ENCODE measurements at regions of chr4 and their contacts with region 1.

Region 1: GRCh38 chr4:163554870-163555465 is 60.5 kb downstream of the TMA16 start:
- DNase-seq: peak; percentile 23
- H3K4me3 ChIP-seq: peak overlapping the region in 1 of 2 experiments; percentile 33; a peak in 1 of 4 replicates
- H3K27ac ChIP-seq: no peak overlapping the region
- H3K4me1 ChIP-seq: peaks cover 0 to 2% of the 10 kb centered on the region in 2 experiments; a peak in 2 of 4 replicates
- H3K27me3 ChIP-seq: peaks cover 33% of the 10 kb centered on the region; the same call in 1 of the 2 replicates
- CTCF ChIP-seq: peak; percentile 88
- EP300 ChIP-seq: no peak
- RAD21 ChIP-seq: peak; percentile 60

Region 2: GRCh38 chr4:163415668-163416067 is 139.3 kb before region 1 on chr4:
- CTCF ChIA-PET with region 1: no interaction called
- POLR2A ChIA-PET with region 1: no interaction called
- DNase-seq: no peak
- H3K4me3 ChIP-seq: no peak overlapping the region
- H3K27ac ChIP-seq: no peak overlapping the region
- H3K4me1 ChIP-seq: no peaks in the 10 kb centered on the region
- H3K27me3 ChIP-seq: no peaks in the 10 kb centered on the region
- CTCF ChIP-seq: no peak
- EP300 ChIP-seq: no peak
- RAD21 ChIP-seq: no peak

Region 3: DNA sequence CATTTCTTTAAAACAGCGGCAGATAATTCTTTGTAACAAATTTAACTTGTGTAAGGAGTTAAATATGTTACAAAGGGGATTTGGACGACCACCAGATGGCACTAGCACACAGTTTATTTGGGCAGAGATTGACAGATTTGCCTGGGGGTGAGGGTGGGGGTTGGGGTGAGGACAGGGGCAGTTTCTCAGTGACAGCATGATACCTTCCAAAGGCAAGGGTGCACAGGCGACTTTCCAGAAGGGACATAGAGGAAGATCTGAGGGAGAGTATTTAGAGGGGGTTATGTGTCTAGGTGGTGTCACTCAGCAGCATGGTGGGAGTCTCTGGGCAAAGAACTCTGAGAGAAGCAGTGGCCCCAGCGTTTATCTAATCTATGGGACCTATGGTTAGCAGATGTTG is 70.1 kb before region 1 on chr4:
- CTCF ChIA-PET with region 1: interaction called, 94 read pairs
- POLR2A ChIA-PET with region 1: no interaction called
- DNase-seq: peak; percentile 63
- H3K4me3 ChIP-seq: peak overlapping the region in 1 of 2 experiments; percentile 50; a peak in 1 of 4 replicates
- H3K27ac ChIP-seq: no peak overlapping the region
- H3K4me1 ChIP-seq: no peaks in the 10 kb centered on the region
- H3K27me3 ChIP-seq: peaks cover 18% of the 10 kb centered on the region; the same call in 1 of the 2 replicates
- CTCF ChIP-seq: peak; percentile 76
- EP300 ChIP-seq: no peak
- RAD21 ChIP-seq: peak; percentile 81

Region 4: GRCh38 chr4:163681208-163681821 is 126.3 kb after region 1 on chr4:
- CTCF ChIA-PET with region 1: interaction called, 42 read pairs
- POLR2A ChIA-PET with region 1: no interaction called
- DNase-seq: peak; percentile 48
- H3K4me3 ChIP-seq: no peak overlapping the region; a peak in 1 of 4 replicates
- H3K27ac ChIP-seq: no peak overlapping the region
- H3K4me1 ChIP-seq: no peaks in the 10 kb centered on the region
- H3K27me3 ChIP-seq: no peaks in the 10 kb centered on the region; the same call in 1 of the 2 replicates
- CTCF ChIP-seq: peak; percentile 69
- EP300 ChIP-seq: no peak
- RAD21 ChIP-seq: peak; percentile 64

Region 5: GRCh38 chr4:164012396-164013027 is 457.5 kb after region 1 on chr4:
- CTCF ChIA-PET with region 1: interaction called, 38 read pairs
- POLR2A ChIA-PET with region 1: no interaction called
- DNase-seq: peak; percentile 12
- H3K4me3 ChIP-seq: peak overlapping the region in 1 of 2 experiments; percentile 40; a peak in 1 of 4 replicates
- H3K27ac ChIP-seq: no peak overlapping the region
- H3K4me1 ChIP-seq: no peaks in the 10 kb centered on the region
- H3K27me3 ChIP-seq: no peaks in the 10 kb centered on the region
- CTCF ChIP-seq: peak; percentile 50
- EP300 ChIP-seq: no peak
- RAD21 ChIP-seq: peak; percentile 74

Measured in SK-N-SH (cell line).